Naive thymus-derived CD8-positive, alpha-beta T cell (primary cell): ENCODE measurements at regions of chr17 and their contacts with region 1.

Region 1: GRCh38 chr17:75087558-75088453 is at the start of gene SLC16A5:
- DNase-seq: peak in 8 of 10 donors; percentile 25 to 51 (median 36)
- ATAC-seq: peak; percentile 65 to 79
- H3K4me3 Mint-ChIP-seq: peak within 1 kb of the TSS; percentile 78 to 90 (median 80)
- H3K27ac Mint-ChIP-seq: peak within 1 kb of the TSS; percentile 70 to 93 (median 84)
- H3K4me1 Mint-ChIP-seq: peaks cover 35 to 66% (median 62%) of the 10 kb centered on the region in 4 donors
- H3K27me3 Mint-ChIP-seq: no peaks in the 10 kb centered on the region
- polyA plus RNA-seq, gene SLC16A5: 1.4 to 4.1 (median 3.1) TPM

Region 2: GRCh38 chr17:75077496-75078283 is 10.1 kb before region 1 on chr17:
- POLR2A ChIA-PET with region 1: interaction called, 21 read pairs
- DNase-seq: peak in 7 of 10 donors; percentile 11 to 47 (median 40)
- ATAC-seq: peak; percentile 90 to 96
- H3K4me3 Mint-ChIP-seq: peak overlapping the region; percentile 64 to 86 (median 76)
- H3K27ac Mint-ChIP-seq: peak overlapping the region in 8 of 10 donors; percentile 20 to 85 (median 62)
- H3K4me1 Mint-ChIP-seq: peaks cover 6 to 20% (median 13%) of the 10 kb centered on the region in 4 donors
- H3K27me3 Mint-ChIP-seq: no peaks in the 10 kb centered on the region

Region 3: DNA sequence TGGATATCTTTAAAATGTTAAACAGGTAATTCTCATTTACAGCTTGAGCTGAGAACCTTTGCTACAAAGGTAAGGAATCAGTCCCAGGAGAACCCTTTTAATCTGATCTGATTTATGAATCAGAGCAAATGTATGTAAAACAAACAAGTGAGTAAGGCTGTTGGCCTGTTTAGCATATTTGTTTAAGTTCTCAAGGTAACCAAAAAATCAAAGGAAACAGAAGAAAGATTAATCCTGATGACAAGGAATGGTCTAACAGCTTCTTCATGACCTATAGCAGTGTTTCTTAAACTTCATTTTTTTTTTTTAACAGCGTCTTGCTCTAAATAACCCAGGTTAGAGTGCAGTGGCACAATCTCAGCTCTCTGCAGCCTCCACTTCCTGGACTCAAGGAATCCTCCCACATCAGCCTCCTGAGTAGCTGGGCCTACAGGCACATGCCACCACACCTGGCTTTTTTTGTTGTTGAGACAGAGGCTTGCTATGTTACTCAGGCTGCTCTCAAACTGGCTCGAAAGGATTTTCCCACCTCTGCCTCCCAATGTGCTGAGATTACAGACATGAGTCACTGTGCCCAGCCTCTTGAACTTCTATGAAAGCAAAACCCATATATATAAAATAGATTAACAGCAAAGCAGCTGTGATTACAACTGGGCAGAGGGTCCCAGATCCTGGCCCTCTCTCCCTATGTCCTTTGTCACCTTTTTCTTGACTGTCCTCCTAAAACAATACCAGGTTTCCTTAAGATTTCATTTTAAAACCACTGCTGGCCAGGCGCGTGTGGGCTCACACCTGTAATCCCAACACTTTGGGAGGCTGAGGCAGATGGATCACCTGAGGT is 71.6 kb after region 1 on chr17:
- POLR2A ChIA-PET with region 1: no interaction called
- DNase-seq: no peak
- ATAC-seq: no peak
- H3K4me3 Mint-ChIP-seq: no peak overlapping the region
- H3K27ac Mint-ChIP-seq: peak overlapping the region in 1 of 10 donors; percentile 61
- H3K4me1 Mint-ChIP-seq: peaks cover 1 to 15% (median 9%) of the 10 kb centered on the region in 4 donors
- H3K27me3 Mint-ChIP-seq: peaks cover 0 to 2% (median 0%) of the 10 kb centered on the region in 5 donors